ENCODE measurements at regions of chr1 and their contacts with region 1.

Region 1: DNA sequence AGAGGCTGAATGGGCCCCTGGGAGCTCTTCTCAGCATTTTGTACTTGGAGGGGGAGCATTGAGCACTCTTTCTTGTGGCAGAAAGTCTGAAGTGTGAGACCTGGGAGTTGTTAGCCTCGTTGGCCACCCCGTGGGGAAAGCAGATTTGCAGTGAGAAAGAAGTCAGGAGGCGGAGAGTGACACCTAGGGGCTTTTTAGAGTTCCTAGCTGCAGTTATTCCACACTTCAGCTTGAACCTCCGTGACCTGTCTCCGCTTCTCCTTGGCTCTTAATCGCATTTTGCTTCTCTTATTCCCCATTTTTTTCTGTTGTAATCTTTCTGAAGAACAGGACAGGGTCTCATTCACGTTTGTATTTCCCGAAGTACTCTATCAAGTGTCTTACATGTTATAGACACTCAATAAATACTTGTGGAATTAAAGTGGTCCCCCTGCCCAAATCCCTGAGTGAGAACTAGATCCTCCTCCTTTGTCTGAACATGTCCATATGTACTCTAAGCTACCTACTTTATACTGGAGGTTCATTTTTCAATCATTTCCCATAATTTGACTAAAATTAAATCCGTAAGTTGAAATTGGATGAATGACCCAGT is 14.5 kb upstream of the C1orf141 start:
- DNase-seq: peak in 8 of 9 donors; percentile 49 to 81 (median 72)
- ATAC-seq: peak; percentile 91
- H3K4me3 ChIP-seq: no peak overlapping the region
- H3K4me3 Mint-ChIP-seq: peak overlapping the region in 3 of 10 donors; percentile 32 to 35 (median 33)
- H3K27ac ChIP-seq: no peak overlapping the region
- H3K27ac Mint-ChIP-seq: peak overlapping the region in 4 of 9 donors; percentile 34 to 75 (median 61)
- H3K4me1 ChIP-seq: peaks cover 0 to 6% of the 10 kb centered on the region in 2 donors
- H3K4me1 Mint-ChIP-seq: peaks cover 7 to 36% (median 34%) of the 10 kb centered on the region in 7 donors
- H3K27me3 ChIP-seq: no peaks in the 10 kb centered on the region
- H3K27me3 Mint-ChIP-seq: peaks cover 0 to 9% (median 0%) of the 10 kb centered on the region in 5 donors

Region 2: GRCh38 chr1:66723985-66724384 is 425.3 kb before region 1 on chr1:
- CTCF ChIA-PET with region 1: no interaction called
- POLR2A ChIA-PET with region 1: no interaction called
- intact Hi-C with region 1: no loop called
- DNase-seq: no peak
- ATAC-seq: no peak
- H3K4me3 ChIP-seq: no peak overlapping the region
- H3K4me3 Mint-ChIP-seq: no peak overlapping the region
- H3K27ac ChIP-seq: no peak overlapping the region
- H3K27ac Mint-ChIP-seq: no peak overlapping the region
- H3K4me1 ChIP-seq: peaks cover 0 to 3% of the 10 kb centered on the region in 2 donors
- H3K4me1 Mint-ChIP-seq: peaks cover under 1 to 17% (median 10%) of the 10 kb centered on the region in 7 donors
- H3K27me3 ChIP-seq: peaks cover 0 to 2% of the 10 kb centered on the region in 2 donors
- H3K27me3 Mint-ChIP-seq: peaks cover 9 to 39% (median 17%) of the 10 kb centered on the region in 5 donors

Region 3: DNA sequence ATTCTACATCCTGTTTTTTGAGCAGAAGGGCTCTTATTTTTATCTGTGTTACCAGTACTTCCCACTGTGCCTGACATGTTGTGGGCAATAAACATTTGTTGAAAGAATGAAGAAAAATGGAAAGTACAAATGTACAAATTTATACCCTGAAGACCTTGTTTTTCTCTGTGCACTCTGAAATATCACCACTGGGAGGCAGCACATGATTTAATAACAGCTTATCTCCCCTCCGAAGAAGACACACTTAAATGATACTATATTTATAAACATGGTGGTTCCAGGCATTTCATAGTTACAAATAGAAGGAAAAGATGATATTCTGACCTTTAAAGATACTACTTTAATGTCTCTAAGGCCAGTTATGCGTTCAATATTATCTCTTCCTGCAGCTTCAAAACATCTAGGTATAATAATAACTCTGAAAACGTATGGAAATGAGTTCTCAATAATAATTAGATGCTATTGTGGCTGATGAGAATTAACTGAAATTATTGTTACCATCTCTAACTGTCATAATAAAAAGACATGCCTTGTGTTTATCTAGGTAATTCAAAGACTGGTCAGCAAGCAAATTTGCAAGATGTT is 384.2 kb before region 1 on chr1:
- CTCF ChIA-PET with region 1: interaction called, 83 read pairs
- POLR2A ChIA-PET with region 1: no interaction called
- intact Hi-C with region 1: loop called (anchors 1 kb)
- DNase-seq: peak in 7 of 9 donors; percentile 48 to 68 (median 62)
- ATAC-seq: peak; percentile 81
- H3K4me3 ChIP-seq: no peak overlapping the region
- H3K4me3 Mint-ChIP-seq: no peak overlapping the region
- H3K27ac ChIP-seq: no peak overlapping the region
- H3K27ac Mint-ChIP-seq: no peak overlapping the region
- H3K4me1 ChIP-seq: no peaks in the 10 kb centered on the region
- H3K4me1 Mint-ChIP-seq: peaks cover 7 to 21% (median 15%) of the 10 kb centered on the region in 7 donors
- H3K27me3 ChIP-seq: no peaks in the 10 kb centered on the region
- H3K27me3 Mint-ChIP-seq: peaks cover 0 to 3% (median 0%) of the 10 kb centered on the region in 5 donors

Region 4: DNA sequence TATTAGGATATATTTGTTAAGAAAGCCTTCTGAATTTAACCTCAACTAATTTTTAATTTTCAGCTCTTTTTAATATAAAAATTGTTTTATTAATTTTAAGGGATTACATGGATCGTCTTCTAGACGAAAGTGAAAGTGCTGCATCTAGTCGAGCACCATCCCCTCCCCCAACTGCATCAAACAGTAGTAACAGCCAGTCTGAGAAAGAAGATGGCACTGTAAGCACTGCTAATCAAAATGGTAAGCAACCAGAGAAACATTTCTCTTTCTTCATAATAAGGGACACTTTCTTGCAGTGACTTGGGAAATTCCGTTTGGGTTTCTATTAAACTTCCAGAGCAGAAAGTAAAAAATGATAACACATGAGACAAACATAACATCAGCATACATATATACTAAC is 167.6 kb before region 1 on chr1:
- CTCF ChIA-PET with region 1: interaction called, 8 read pairs
- POLR2A ChIA-PET with region 1: interaction called, 6 read pairs
- intact Hi-C with region 1: loop called (anchors 1 to 5 kb)
- DNase-seq: peak in 7 of 9 donors; percentile 52 to 78 (median 69)
- ATAC-seq: peak; percentile 93
- H3K4me3 ChIP-seq: peak overlapping the region; percentile 22
- H3K4me3 Mint-ChIP-seq: peak overlapping the region; percentile 64 to 84 (median 80)
- H3K27ac ChIP-seq: peak overlapping the region; percentile 78
- H3K27ac Mint-ChIP-seq: peak overlapping the region; percentile 83 to 94 (median 93)
- H3K4me1 ChIP-seq: peaks cover 0 to 8% of the 10 kb centered on the region in 2 donors
- H3K4me1 Mint-ChIP-seq: peaks cover 6 to 48% (median 37%) of the 10 kb centered on the region in 7 donors
- H3K27me3 ChIP-seq: no peaks in the 10 kb centered on the region
- H3K27me3 Mint-ChIP-seq: no peaks in the 10 kb centered on the region

Region 5: DNA sequence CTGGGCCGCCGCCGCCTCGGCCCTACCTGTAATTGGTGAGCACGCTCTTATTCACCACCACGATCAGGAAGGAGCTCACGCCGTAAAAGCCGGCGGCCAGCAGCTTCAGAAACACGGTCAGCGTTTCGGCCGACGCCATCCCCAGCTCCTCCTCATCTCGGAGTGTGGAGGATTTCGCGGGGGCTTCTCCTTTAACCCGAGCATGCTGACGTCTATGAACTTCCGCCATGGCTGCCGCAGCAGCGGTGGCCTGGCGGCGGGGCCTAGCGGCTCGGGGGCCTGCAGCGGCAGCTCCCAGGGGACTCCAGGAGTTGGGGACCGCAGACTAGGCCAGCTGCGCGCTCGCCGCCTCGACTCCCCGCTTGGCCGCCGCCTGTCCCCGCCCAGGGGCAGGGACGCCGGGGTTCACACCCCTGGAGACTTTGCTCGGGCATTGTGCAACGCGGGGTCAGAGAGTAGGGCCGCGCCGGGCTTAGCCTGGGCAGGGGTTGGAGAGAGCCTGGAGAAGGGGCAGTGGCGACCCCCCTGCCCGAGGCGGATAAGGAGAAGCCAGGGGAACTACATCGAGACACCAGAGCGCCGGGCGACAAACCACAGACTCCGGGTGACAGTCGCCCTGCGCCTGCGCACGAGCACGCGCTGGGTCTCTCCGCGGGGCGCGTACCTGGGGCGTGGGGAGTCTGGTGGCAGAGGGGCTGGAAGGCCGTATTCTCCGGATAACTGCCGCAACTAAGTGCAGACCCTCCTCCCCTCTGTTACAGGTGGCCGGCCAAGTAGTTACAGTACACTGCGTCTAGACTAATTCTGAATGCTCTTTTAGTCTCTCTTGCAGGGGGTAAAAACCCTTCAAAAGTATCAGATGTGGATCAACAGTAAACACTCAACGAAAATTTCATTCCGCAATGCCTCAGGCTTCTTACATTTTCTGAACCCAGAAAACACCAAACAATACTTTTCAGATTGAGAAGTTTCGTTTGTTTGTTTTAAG is 95.2 kb before region 1 on chr1 and contains the start of gene SLC35D1:
- CTCF ChIA-PET with region 1: interaction called, 11 read pairs
- POLR2A ChIA-PET with region 1: interaction called, 16 read pairs
- intact Hi-C with region 1: loop called in 1 of 2 experiments (anchors 1 kb)
- DNase-seq: peak; percentile 65 to 88 (median 76)
- ATAC-seq: peak; percentile 86
- H3K4me3 ChIP-seq: peak within 1 kb of the TSS; percentile 87
- H3K4me3 Mint-ChIP-seq: peak within 1 kb of the TSS; percentile 90 to 97 (median 95)
- H3K27ac ChIP-seq: peak within 1 kb of the TSS; percentile 96
- H3K27ac Mint-ChIP-seq: peak within 1 kb of the TSS; percentile 80 to 99 (median 94)
- H3K4me1 ChIP-seq: peaks cover 6 to 13% of the 10 kb centered on the region in 2 donors
- H3K4me1 Mint-ChIP-seq: peaks cover 17 to 37% (median 30%) of the 10 kb centered on the region in 7 donors
- H3K27me3 ChIP-seq: no peaks in the 10 kb centered on the region
- H3K27me3 Mint-ChIP-seq: peaks cover 0 to 9% (median 0%) of the 10 kb centered on the region in 5 donors
- total RNA-seq, gene SLC35D1: 9.8 to 25.7 (median 15.4) TPM

Region 6: GRCh38 chr1:67174716-67175284 is 25.5 kb after region 1 on chr1:
- CTCF ChIA-PET with region 1: interaction called, 9 read pairs
- POLR2A ChIA-PET with region 1: interaction called, 7 read pairs
- intact Hi-C with region 1: loop called (anchors 1 to 2 kb)
- DNase-seq: no peak
- ATAC-seq: no peak
- H3K4me3 ChIP-seq: no peak overlapping the region
- H3K4me3 Mint-ChIP-seq: peak overlapping the region in 1 of 10 donors; percentile 15
- H3K27ac ChIP-seq: no peak overlapping the region
- H3K27ac Mint-ChIP-seq: peak overlapping the region in 1 of 9 donors; percentile 60
- H3K4me1 ChIP-seq: peaks cover 29 to 32% of the 10 kb centered on the region in 2 donors
- H3K4me1 Mint-ChIP-seq: peaks cover 43 to 66% (median 53%) of the 10 kb centered on the region in 7 donors
- H3K27me3 ChIP-seq: no peaks in the 10 kb centered on the region
- H3K27me3 Mint-ChIP-seq: peaks cover 0 to 4% (median 0%) of the 10 kb centered on the region in 5 donors

Region 7: DNA sequence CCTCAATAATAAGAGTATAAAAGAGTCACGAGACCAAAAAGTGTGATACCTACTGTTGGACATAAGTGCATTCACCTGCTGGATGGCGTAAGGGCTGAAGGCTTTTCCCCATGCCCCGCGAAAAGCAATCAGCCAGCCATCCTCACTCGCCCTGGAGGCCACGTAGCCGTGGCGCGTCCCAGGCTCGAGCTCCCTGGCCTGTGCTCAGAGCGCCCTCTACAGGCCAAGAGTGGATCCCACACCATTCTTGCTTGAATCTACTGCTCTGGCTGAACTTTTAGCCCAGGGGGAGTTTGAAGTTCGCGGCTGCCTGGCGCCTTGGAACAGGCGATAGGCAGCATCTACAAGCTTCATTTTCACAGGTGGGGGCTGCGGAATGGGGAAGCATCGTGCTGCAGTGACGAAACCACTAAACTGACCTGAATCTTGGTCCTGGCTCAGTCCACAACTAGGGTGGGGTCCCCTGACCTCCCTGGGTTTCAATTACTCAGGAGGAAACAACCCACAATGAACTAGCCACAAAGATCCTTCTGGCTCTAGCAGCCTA is 351.2 kb after region 1 on chr1:
- CTCF ChIA-PET with region 1: interaction called, 5 read pairs
- POLR2A ChIA-PET with region 1: no interaction called
- intact Hi-C with region 1: loop called (anchors 1 kb)
- DNase-seq: peak; percentile 67 to 89 (median 81)
- ATAC-seq: peak; percentile 100
- H3K4me3 ChIP-seq: no peak overlapping the region
- H3K4me3 Mint-ChIP-seq: peak overlapping the region in 3 of 10 donors; percentile 26 to 56 (median 37)
- H3K27ac ChIP-seq: no peak overlapping the region
- H3K27ac Mint-ChIP-seq: peak overlapping the region in 1 of 9 donors; percentile 35
- H3K4me1 ChIP-seq: no peaks in the 10 kb centered on the region
- H3K4me1 Mint-ChIP-seq: peaks cover 0 to 5% (median 4%) of the 10 kb centered on the region in 7 donors
- H3K27me3 ChIP-seq: no peaks in the 10 kb centered on the region
- H3K27me3 Mint-ChIP-seq: peaks cover 0 to 11% (median 0%) of the 10 kb centered on the region in 5 donors

Region 8: DNA sequence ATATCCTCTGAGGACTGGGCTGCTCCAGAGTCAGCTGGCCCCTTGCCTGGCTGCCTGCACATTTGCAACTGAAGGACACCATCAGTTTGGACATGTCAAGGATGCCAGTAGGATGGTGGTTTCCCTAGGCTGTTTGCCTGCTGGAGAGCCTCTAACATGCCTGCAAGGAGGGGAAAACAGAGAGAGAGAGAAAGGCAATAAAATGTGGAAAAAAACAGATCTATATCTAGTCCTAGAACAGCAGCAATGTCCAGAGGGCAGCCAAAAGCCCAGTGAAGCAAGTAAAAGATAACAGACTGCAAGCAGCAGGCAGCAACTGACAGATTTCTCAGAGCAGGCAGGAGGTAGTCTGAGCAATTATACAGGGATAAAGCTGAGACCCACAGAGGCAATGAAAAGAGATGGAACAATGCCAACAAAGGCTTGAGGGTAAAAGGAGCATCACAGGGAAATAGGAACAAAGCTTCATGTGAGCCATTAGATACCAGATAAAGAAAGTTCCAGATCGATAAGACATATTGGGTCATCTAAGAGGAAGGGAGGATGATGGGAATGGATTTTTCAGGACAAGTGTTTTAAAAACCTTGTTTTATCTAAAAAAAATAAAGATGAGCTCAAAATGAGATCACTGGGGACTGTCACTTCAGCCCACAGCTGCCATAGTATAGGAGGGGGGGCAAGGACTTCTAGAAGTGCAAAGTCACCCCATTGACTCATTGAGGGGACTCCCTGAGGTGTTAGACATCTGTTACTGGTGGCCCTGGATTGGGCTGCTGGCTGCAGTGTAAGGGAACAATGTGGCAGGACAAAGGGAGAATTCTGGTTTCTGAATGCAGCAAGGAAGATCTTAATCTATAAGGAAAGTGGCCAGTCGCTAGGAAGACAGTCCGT is 497.1 kb after region 1 on chr1:
- CTCF ChIA-PET with region 1: no interaction called
- POLR2A ChIA-PET with region 1: no interaction called
- intact Hi-C with region 1: no loop called
- DNase-seq: no peak
- ATAC-seq: peak; percentile 50
- H3K4me3 ChIP-seq: no peak overlapping the region
- H3K4me3 Mint-ChIP-seq: no peak overlapping the region
- H3K27ac ChIP-seq: no peak overlapping the region
- H3K27ac Mint-ChIP-seq: no peak overlapping the region
- H3K4me1 ChIP-seq: no peaks in the 10 kb centered on the region
- H3K4me1 Mint-ChIP-seq: no peaks in the 10 kb centered on the region
- H3K27me3 ChIP-seq: no peaks in the 10 kb centered on the region
- H3K27me3 Mint-ChIP-seq: peaks cover 0 to 1% (median 0%) of the 10 kb centered on the region in 5 donors

Region 9: GRCh38 chr1:68889471-68889870 is 1740.2 kb after region 1 on chr1:
- CTCF ChIA-PET with region 1: no interaction called
- POLR2A ChIA-PET with region 1: no interaction called
- intact Hi-C with region 1: no loop called
- DNase-seq: no peak
- ATAC-seq: no peak
- H3K4me3 ChIP-seq: no peak overlapping the region
- H3K4me3 Mint-ChIP-seq: no peak overlapping the region
- H3K27ac ChIP-seq: no peak overlapping the region
- H3K27ac Mint-ChIP-seq: no peak overlapping the region
- H3K4me1 ChIP-seq: no peaks in the 10 kb centered on the region
- H3K4me1 Mint-ChIP-seq: no peaks in the 10 kb centered on the region
- H3K27me3 ChIP-seq: no peaks in the 10 kb centered on the region
- H3K27me3 Mint-ChIP-seq: no peaks in the 10 kb centered on the region

Measured in naive thymus-derived CD4-positive, alpha-beta T cell (primary cell).